ENCODE measurements at regions of chr6 and their contacts with region 1.

Region 1: DNA sequence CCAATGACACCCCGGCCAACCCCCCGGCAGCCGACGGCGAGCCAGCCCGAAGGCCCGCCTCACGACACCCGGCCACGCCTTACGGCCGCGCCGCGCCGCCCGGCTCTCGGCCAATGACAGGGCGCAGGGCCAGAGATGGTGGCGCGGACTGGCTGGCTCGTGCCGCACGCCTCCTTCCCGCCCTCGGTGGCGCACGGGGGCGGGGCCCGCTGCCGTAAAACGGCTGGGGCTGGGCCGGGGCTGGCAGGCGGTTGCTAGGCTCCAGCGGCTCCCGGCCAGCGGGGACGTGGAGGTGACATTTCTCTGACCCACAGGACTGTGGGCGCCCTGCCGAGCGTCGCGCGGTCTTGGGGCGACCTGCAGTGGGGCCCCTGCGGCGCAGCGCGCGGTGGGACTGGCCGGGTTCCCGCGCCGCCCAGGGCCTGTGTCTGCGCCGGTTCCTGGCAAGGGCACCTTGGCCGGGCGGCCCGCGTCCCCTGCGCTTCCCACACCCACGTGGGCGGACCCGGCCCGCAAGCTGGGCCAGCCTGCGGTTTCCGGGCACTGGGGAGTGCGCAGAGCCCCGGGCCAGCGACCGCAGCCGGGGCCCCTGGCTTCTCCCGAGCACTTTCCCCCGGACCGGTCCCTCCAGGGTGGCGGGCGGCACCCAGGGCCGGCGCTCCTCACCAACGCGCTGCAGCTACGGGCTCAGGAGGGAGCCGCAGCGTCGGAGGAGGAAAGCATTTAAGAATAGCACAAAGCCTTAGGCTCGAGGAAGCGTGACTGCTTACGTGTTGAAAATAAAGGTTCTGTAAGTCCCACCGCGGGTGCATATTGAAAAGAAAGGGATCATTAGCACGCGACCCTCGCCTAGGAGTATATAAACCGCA is at the start of gene MPC1:
- DNase-seq: peak; percentile 97
- CTCF ChIP-seq: no peak

Region 2: DNA sequence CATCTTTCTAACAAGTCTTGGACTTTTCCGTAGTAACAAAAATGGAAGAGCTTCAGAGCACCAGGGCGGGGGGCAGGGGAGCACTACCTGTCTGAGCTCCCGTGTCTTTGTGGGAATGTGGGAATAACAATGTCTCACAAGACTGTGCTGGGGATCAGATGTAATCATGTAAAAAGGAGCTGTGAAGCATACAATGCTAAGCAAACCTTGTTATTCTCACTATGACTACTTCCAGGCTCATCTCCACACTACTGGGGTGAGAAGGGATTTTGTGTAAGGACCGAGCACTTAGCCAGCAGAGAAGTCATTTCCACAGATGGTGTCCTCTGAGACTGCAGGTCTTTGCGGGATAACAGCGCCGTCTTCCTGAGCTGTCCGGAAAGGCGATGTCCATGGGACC is 102.1 kb before region 1 on chr6:
- CTCF ChIA-PET with region 1: interaction called, 33 read pairs
- POLR2A ChIA-PET with region 1: interaction called, 10 read pairs
- DNase-seq: no peak
- CTCF ChIP-seq: no peak

Region 3: GRCh38 chr6:166313255-166314070 is 69.7 kb before region 1 on chr6:
- CTCF ChIA-PET with region 1: interaction called, 23 read pairs
- POLR2A ChIA-PET with region 1: no interaction called
- DNase-seq: peak; percentile 79
- CTCF ChIP-seq: peak; percentile 79

Region 4: DNA sequence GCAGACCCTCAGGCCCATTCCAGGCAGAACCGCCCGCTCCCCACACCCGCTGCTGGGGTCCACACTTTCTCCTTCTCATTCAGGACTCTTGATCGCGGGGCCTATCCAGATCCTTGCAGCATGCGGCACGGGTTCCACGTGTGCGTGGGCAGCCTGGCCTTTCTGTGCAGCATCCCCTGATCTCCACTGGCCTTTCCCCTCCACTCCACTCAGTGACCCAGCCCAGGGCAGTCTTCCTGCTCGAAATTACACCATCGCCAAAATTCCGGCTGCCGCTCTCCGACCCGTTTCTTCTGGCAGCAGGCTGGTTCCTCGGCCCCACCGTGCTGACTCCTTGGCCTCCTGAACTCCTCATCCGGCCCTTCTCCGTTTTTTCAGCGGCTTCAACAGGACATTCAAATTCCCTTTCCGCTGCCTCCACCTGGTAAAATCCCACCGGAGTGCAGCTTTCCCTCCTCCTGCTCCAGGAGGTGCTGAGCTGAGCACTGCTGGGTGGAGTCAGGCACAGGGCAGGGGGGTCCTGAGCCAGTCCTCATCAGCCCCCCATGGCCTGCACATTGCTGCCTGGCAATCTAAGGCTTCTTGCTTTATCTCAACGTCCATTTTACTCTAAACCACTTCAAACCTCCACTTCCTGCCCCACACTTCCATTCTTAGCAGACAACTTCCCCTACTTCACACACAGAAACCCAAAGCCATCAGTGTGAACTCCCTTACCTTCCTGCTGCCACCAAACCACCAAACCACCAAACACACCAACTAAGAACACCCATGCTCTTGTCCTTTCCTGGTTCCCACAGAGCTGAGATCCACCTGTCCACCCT is 49.8 kb before region 1 on chr6:
- CTCF ChIA-PET with region 1: interaction called, 12 read pairs
- POLR2A ChIA-PET with region 1: no interaction called
- DNase-seq: peak; percentile 79
- CTCF ChIP-seq: no peak

Region 5: DNA sequence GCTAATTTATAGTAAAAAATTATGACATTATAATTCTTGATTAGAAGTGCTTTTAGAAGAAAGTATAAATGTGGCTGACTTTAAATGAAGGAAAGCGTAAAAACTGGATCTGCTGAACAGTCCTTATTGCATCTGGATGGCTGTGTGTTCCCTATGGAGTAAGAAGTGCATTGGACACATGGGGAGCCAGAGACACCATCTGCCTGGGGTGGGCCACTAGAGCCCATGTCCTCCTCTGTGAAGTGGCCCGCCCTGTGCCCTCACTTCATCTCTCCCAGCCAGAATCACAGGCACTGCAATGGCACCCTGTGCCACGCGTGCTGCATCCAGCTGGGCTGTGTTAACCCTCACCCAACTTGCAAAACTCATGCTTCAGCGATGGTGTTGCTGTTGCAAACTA is 27.6 kb before region 1 on chr6:
- CTCF ChIA-PET with region 1: interaction called, 14 read pairs
- POLR2A ChIA-PET with region 1: no interaction called
- DNase-seq: no peak
- CTCF ChIP-seq: no peak

Region 6: DNA sequence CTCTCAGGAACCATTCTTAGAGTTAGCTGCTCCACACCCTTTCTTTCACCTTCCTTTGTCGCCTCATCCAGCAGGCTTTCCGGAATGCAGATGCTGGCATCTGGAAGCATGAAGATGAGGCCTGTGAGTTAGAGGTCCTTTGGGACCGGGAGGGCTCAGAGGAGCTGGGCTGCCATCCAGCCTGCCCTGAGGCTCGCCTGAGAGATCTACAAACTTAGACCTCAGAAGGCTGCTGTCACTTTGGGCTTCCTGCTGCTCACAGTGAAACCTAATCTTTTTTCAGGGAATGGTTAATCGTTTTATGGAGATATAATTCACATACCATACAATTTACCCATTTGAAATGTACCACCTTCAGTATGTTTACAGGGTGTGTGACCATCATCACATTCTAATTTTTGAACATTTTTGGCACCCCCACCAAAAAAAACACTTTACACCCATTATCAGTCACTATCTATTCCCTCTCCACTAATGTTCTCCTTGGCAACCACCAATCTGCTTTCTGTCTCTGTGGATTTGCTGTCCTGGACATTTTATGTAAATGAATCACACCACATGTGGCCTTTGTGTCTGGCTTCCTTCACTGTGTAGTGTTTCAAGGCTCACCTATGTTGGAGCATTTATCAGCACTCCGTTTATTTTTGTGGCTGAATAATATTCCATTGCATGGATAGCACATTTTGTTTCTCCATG is 19.6 kb after region 1 on chr6:
- CTCF ChIA-PET with region 1: interaction called, 76 read pairs
- POLR2A ChIA-PET with region 1: no interaction called
- DNase-seq: no peak
- CTCF ChIP-seq: no peak

Region 7: DNA sequence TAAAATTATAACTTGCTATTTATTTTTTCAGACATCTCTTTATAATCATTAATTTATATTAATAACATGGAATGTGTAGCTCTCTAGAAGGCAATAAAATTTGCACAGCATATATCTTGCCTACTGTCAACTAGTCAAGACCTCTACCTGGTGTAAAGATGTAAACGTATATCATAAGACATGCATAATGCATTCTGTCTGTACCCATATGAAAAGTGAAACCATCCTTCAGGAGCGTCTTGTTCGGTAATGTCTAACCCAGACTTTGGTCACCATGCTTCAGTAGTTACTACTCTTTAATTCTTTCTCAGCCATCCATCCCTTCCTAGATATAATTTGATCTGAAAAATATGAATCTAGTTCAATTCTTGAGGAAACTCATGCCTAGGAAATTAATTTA is 637.0 kb after region 1 on chr6:
- CTCF ChIA-PET with region 1: no interaction called
- POLR2A ChIA-PET with region 1: no interaction called
- DNase-seq: peak; percentile 60
- CTCF ChIP-seq: no peak

Measured in GM10248 (cell line).